PC-9 (cell line): ENCODE measurements at regions of chr12 and their contacts with region 1.

Region 1: GRCh38 chr12:47870175-47870781 is 34.5 kb downstream of the VDR start:
- DNase-seq: no peak
- H3K4me3 ChIP-seq: no peak overlapping the region
- H3K27ac ChIP-seq: no peak overlapping the region
- H3K4me1 ChIP-seq: no peaks in the 10 kb centered on the region
- H3K27me3 ChIP-seq: no peaks in the 10 kb centered on the region
- CTCF ChIP-seq: peak; percentile 51

Region 2: DNA sequence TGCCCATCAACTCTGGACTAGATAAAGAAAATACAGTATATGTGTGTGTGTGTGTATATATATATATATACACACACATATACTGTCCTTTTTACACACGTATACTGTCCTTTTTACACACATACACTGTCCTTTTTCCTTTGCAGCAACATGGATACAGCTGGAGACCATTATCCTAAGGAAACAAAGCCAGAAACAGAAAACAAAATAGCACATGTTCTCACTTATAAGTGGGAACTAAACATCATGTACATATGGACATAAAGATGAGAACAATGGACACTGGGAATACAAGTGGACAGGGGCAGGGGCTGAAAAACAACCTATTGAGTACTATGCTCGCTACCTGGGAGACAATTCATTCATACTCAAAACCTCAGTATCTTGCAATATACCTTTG is 10.8 kb after region 1 on chr12:
- CTCF ChIA-PET with region 1: no interaction called
- POLR2A ChIA-PET with region 1: interaction called, 38 read pairs
- intact Hi-C with region 1: no loop called
- DNase-seq: no peak
- H3K4me3 ChIP-seq: no peak overlapping the region
- H3K27ac ChIP-seq: no peak overlapping the region
- H3K4me1 ChIP-seq: peaks cover 15% of the 10 kb centered on the region
- H3K27me3 ChIP-seq: no peaks in the 10 kb centered on the region
- CTCF ChIP-seq: no peak